Activated CD4-positive, alpha-beta memory T cell treated with anti-CD3 and anti-CD28 coated beads for 36 hours (primary cell): ENCODE measurements at regions of chr6 and their contacts with region 1.

Region 1: DNA sequence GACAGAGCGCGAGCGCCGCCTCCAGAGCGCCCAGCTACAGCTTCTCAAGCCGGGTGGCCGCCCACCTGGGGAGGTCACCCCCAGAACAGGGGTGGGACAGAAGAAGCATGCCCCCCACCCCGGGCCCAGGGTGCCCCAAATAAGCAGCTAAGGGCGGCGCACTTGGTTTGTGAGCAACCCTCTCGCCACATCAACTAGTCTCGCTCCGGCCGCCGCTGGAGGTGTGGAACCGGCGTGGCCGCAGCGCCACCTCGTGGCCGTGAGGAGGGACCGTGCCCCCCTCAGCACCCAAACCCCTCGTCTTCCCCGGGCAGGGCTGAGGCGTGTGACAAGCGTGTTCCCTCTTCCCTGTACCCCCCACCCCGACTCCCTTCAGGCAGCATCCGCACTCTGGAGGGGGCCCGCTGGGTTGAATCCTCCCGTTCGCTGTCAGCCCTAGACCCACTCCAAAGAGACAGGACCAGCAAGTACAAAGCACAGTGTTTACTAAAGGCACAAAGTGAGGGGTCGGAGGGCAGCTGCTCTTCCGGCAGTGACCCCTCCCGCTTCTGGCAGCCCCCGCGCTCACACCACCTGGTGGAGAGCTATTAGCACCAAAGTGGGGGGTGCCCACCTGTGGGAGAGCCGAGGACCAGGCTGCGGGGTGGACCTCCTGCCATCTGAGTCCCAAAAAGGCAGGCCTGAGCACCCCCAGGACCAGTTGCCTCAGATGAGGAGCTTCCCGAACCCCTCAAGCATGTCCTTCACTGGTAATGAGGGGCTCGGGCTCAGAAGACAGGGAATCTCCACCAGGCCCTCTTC is 45.4 kb downstream of the MDFI start:
- DNase-seq: peak; percentile 84
- H3K4me3 Mint-ChIP-seq: peak overlapping the region; percentile 70
- H3K27ac Mint-ChIP-seq: peak overlapping the region; percentile 75
- H3K4me1 Mint-ChIP-seq: peaks cover 10% of the 10 kb centered on the region
- H3K27me3 Mint-ChIP-seq: no peaks in the 10 kb centered on the region

Region 2: GRCh38 chr6:41367700-41368099 is 316.0 kb before region 1 on chr6:
- CTCF ChIA-PET with region 1: interaction called, 62 read pairs
- POLR2A ChIA-PET with region 1: no interaction called
- intact Hi-C with region 1: loop called (anchors 1 kb)
- DNase-seq: peak; percentile 25
- H3K4me3 Mint-ChIP-seq: no peak overlapping the region
- H3K27ac Mint-ChIP-seq: no peak overlapping the region
- H3K4me1 Mint-ChIP-seq: peaks cover 15% of the 10 kb centered on the region
- H3K27me3 Mint-ChIP-seq: peaks cover 49% of the 10 kb centered on the region

Region 3: DNA sequence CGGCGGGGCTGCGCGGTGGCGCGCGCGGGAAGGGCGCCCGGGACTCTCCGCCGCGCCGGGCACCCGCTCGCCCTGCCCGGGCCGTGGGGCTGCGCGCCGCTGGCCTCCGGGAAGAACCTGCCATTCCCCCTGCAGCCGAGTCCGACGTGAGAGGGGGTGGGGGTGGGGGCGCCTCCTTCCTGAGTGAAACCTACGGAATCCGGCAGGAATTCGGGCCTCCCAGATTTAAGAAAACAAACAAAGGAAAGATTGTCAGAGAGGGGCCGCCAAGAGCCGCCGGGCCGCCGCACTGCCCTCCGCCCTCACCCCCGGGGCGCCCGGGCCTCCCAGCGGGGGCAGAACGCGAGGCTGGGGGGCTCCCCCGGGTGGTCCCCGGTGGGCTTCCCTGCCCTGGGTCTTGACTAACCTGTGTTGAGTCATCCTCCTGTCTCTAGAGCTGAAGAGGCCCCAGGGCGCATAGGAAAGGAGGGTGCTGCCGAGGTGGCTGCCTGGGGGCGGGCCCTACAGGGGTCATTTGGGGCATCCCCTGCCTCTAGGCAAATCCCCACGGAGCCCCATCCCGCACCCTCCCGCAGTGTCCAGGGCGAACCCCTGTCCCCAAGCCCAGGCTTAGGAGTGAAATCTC is 179.8 kb before region 1 on chr6:
- CTCF ChIA-PET with region 1: no interaction called
- POLR2A ChIA-PET with region 1: no interaction called
- intact Hi-C with region 1: loop called (anchors 1 kb)
- DNase-seq: peak; percentile 23
- H3K4me3 Mint-ChIP-seq: peak overlapping the region; percentile 50
- H3K27ac Mint-ChIP-seq: no peak overlapping the region
- H3K4me1 Mint-ChIP-seq: peaks cover 18% of the 10 kb centered on the region
- H3K27me3 Mint-ChIP-seq: peaks cover 49% of the 10 kb centered on the region

Region 4: DNA sequence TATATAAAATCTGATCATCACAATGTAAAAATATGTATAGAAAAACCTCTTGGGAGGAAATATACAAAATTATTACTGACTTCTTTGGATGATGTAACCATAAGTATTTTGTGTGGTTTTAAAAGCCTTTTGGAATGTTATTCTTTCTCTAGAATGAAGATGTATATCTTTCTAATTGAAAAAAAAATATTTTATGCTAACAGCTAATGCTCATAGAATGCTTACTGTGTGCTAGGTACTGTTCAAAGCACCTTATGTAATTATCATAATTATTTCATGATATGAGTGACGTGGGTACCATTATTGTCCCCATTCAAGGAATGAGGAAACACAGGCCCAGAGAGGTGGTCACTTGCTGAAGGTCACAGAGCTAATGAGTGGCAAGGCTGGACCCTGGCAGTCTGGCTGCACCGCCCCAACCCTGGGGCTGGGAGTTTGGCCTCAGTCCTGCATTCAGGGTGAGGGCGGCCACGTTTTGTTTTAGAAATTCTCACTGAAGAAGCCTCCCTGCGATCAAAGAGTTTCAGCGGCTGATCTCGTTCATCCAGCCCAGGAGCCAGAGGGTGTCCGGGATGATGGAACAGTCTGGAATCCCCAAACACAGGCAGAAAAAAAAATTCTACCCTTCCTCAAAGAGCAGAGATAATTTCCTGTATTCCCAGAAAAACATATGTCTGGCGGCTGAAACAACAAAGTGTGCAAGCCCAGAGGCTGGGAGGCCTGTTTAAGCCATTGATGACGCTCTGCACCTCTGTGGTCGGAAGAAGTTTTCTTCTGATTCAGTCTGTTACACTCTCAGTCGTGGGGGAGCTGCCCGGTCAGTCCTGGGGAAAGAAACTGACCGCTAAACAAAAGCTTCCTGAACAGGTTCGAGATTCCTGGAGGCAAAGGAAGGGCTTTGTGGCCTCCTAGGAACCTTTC is 14.4 kb after region 1 on chr6:
- CTCF ChIA-PET with region 1: interaction called, 29 read pairs
- POLR2A ChIA-PET with region 1: no interaction called
- intact Hi-C with region 1: no loop called
- DNase-seq: no peak
- H3K4me3 Mint-ChIP-seq: no peak overlapping the region
- H3K27ac Mint-ChIP-seq: no peak overlapping the region
- H3K4me1 Mint-ChIP-seq: no peaks in the 10 kb centered on the region
- H3K27me3 Mint-ChIP-seq: no peaks in the 10 kb centered on the region

Region 5: GRCh38 chr6:41735427-41736356 is 52.0 kb after region 1 on chr6 and contains the start of gene TFEB:
- CTCF ChIA-PET with region 1: interaction called, 15 read pairs
- POLR2A ChIA-PET with region 1: no interaction called
- intact Hi-C with region 1: no loop called
- DNase-seq: peak; percentile 95
- H3K4me3 Mint-ChIP-seq: peak within 1 kb of the TSS; percentile 67
- H3K27ac Mint-ChIP-seq: peak within 1 kb of the TSS; percentile 18
- H3K4me1 Mint-ChIP-seq: peaks cover 27% of the 10 kb centered on the region
- H3K27me3 Mint-ChIP-seq: no peaks in the 10 kb centered on the region
- total RNA-seq, gene TFEB: 11.7 to 13.4 TPM